Right cardiac atrium (tissue), 5 donors: ENCODE measurements at regions of chr5 and their contacts with region 1.

Region 1: DNA sequence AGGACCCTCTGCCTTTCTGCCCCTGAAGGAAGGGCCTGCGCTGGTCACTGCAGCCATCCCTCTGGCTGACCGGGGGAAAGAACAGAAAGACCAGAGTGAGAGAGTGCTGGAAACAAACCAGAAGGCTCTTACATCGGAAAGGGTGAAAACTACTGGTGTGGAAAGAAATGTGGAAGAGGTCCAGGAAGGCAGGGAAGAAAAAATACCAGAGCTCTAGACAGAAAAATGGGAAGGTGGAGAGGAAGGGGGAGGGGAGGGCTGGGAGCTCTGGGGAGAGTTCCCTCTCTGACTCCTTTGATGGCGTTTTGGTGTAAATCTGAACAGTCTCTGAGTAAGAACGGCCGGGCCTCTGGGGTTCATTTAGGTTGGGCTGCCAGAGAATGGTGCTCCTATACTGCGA is 47.7 kb downstream of the COL23A1 start:
- DNase-seq: no peak
- ATAC-seq: peak; percentile 41 to 46
- H3K4me3 ChIP-seq: no peak overlapping the region
- H3K27ac ChIP-seq: no peak overlapping the region
- H3K4me1 ChIP-seq: no peaks in the 10 kb centered on the region
- H3K27me3 ChIP-seq: no peaks in the 10 kb centered on the region

Region 2: GRCh38 chr5:177982072-177982727 is 560.3 kb before region 1 on chr5:
- intact Hi-C with region 1: no loop called
- DNase-seq: no peak
- ATAC-seq: peak in 1 of 2 donors; percentile 19
- H3K4me3 ChIP-seq: no peak overlapping the region
- H3K27ac ChIP-seq: no peak overlapping the region
- H3K4me1 ChIP-seq: no peaks in the 10 kb centered on the region
- H3K27me3 ChIP-seq: peaks cover 4% of the 10 kb centered on the region

Region 3: DNA sequence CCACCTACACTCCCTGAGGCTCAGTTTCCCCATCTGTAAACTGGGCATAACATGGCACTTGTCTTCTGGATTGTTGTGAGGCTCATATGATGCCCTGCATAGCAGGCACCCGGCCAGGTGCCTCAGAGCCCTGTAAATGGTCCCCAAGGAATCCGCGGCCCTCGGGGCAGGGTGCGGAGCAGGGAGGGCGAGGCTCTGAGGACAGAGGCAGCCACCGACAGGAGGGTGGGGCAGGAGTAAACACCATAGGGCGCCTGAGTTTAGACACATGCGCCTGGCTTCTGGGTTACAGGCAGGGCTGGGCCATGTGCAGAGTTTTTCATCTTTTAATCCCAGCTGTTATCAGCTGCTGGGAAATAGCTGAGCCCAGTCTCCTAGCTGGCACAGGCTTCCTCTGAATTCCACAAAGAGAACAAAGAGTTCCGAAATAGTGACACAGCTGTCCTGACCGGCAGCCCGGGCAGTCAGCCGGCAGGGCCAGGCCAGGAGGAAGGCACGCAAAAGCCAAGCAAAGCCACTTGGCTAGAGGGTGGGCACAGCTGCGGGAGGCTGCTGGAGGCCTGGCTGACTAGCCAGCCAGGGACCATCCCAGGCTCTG is 211.0 kb before region 1 on chr5:
- intact Hi-C with region 1: no loop called
- DNase-seq: peak; percentile 69 to 87 (median 86)
- ATAC-seq: peak; percentile 86
- H3K4me3 ChIP-seq: no peak overlapping the region
- H3K27ac ChIP-seq: peak overlapping the region; percentile 88
- H3K4me1 ChIP-seq: peaks cover 5% of the 10 kb centered on the region
- H3K27me3 ChIP-seq: no peaks in the 10 kb centered on the region

Region 4: DNA sequence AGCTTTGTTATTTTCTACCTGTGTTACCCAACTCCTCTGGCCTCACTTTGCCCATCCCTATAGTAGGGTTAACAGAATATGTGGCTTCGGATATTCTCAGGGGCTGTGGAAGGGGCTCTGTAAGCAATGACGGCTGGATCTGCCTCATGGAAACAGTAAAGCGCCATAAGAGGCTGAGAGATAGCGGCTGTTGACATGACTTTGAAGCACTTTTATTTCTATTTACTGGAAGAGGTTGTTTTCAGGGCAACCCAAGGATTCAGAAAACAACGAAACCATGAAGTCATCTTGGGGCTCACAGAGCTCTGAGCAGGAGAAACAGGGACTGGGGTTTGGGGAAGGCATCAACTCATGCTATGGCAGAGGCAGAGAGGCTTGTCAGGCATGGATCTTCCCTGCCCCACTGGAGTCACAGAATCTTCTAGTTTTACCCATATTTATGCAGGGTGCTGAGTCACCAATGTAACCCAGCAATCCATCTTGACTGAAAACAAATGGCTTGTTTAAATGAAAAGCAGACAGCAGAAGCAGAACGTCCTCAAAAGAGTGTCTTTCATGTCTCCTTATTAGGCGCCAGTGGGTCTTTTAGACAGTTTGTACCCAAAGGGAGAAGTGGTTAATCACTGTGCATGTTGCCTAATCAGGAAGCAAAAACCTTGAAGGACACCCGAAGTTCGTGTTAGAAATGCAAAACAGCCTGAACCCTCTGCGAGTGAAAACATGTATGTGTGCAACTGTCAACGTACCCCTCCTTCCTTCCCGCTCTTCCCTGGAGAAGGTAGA is 65.3 kb before region 1 on chr5:
- intact Hi-C with region 1: loop called in 1 of 4 experiments (anchors 10 kb)
- DNase-seq: no peak
- ATAC-seq: peak in 1 of 2 donors; percentile 30
- H3K4me3 ChIP-seq: no peak overlapping the region
- H3K27ac ChIP-seq: no peak overlapping the region
- H3K4me1 ChIP-seq: no peaks in the 10 kb centered on the region
- H3K27me3 ChIP-seq: no peaks in the 10 kb centered on the region

Region 5: DNA sequence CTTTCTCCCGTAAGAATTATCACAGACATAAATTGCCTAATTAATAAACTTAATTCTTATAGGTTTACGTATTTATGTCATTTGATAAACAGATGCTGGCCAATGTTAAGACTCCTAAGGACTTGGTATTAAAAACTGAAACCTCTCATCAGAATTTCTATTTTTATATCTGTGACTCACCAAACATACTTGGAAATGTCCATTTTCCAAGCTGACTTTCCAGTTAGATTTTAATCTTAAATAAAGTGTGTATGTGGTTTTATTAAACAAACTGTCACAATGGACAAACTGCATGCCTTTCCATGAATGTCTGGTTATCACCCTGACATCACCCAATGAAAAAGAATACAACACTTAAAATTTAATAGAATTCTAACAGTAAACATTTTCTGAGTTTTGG is 60.3 kb after region 1 on chr5:
- intact Hi-C with region 1: no loop called
- DNase-seq: no peak
- ATAC-seq: no peak
- H3K4me3 ChIP-seq: no peak overlapping the region
- H3K27ac ChIP-seq: no peak overlapping the region
- H3K4me1 ChIP-seq: no peaks in the 10 kb centered on the region
- H3K27me3 ChIP-seq: no peaks in the 10 kb centered on the region

Region 6: DNA sequence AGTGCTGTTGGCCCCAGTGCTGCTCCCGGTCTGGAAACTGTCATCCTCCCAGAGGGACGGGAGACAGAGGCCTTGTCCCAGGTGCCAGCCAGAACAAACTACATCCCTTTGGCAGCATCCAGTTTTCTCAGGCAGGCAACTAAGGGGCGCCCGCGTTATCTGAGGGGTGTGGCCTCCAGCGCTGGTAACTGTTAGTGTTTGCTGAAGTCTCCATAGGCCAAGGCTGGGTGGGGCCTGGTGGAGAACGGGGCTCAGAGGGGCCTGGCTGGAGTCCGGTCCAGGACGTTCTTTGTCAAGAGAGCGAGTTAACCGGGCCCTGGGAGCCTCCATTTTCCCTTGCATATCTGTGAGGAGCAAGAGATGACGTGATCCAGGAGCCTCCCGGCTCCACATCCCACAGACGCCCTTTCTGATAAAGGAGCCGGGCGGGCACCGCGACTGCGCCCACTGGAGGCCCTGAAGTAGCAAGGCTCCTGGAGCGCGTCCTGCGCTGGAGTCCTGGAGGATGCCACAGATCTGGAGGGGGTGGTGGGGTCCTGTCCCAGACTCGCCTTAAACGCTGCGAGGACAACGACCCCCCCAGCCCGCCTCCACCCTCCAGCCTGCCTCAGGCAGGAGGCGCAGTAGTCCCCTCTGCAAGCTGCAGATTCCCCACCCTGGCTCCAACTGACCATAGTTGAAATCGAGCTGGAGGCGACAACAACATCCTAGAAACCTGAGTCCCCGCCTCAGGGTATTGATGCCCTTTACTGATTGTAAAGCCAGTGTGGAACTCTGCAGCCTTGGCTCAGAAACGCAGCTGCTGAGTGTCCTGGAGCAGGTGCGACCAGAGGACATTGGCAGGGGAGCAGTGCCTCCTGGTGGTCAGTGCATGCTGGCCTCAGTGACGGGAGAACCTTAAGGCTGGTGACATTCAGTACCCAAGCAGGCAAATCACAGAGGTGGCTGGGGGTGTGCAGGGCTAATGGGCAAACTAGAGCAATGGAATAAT is 296.5 kb after region 1 on chr5:
- intact Hi-C with region 1: no loop called
- DNase-seq: peak; percentile 52 to 74 (median 70)
- ATAC-seq: peak; percentile 63 to 88
- H3K4me3 ChIP-seq: no peak overlapping the region
- H3K27ac ChIP-seq: no peak overlapping the region
- H3K4me1 ChIP-seq: no peaks in the 10 kb centered on the region
- H3K27me3 ChIP-seq: no peaks in the 10 kb centered on the region